ENCODE measurements at regions of chr1 and their contacts with region 1.

Region 1: DNA sequence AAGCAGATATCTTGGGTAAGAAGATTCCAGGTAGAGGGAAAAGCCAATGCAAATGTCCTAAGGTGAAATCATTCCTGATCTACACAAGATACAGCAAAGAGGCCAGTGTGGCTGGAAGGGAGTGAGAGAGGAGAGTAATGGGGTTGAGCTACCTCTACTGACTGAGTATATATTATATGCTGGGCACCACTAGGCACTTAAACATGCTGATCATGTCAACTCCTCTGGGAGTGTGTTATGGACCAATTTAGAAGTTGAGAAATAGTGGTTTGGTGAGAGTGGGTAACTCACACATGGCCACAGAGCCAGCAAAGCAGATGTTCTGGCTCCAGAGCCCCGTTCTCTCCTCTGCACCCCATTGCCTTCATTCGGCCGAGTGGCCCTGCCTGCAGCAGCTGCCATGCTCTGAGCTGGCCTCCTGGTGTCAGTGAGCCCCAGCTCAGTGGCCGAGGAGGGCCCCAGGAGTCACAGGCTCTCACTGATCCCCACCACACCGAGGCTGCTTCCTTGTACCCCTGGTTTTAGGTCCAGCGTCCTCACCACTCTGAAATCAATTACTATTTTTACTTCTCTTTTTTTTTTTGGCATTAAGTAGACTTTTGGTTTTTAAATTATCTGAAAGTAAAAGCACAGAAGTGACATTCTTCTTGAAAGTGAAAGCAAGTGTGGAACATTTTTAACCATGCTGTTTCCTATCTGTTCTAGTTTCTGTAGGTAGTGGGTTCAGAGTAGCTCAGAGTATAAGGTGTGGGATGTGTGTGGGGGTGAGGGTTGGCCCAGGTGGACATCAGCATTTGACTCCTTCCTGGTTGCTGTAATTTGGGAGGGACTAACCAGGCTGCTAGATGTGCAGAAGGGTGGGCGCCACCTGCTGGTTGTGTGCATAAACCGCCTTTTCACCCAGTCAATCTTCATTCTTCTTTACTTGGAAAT is 45.8 kb upstream of the CRNN start:
- DNase-seq: peak; percentile 54
- ATAC-seq: peak; percentile 78
- H3K4me3 ChIP-seq: peak overlapping the region; percentile 12 to 29
- H3K27ac ChIP-seq: no peak overlapping the region
- H3K4me1 ChIP-seq: no peaks in the 10 kb centered on the region
- H3K27me3 ChIP-seq: no peaks in the 10 kb centered on the region
- CTCF ChIP-seq: peak; percentile 95

Region 2: GRCh38 chr1:152047730-152048402 is 412.0 kb before region 1 on chr1:
- CTCF ChIA-PET with region 1: interaction called, 14 read pairs
- POLR2A ChIA-PET with region 1: no interaction called
- in situ Hi-C with region 1: no loop called
- intact Hi-C with region 1: loop called (anchors 5 kb)
- DNase-seq: peak; percentile 96
- ATAC-seq: peak; percentile 97
- H3K4me3 ChIP-seq: peak overlapping the region; percentile 34 to 59
- H3K27ac ChIP-seq: peak overlapping the region; percentile 99
- H3K4me1 ChIP-seq: peaks cover 23% of the 10 kb centered on the region
- H3K27me3 ChIP-seq: no peaks in the 10 kb centered on the region
- CTCF ChIP-seq: peak; percentile 75

Region 3: GRCh38 chr1:152141974-152142584 is 317.8 kb before region 1 on chr1:
- CTCF ChIA-PET with region 1: interaction called, 4 read pairs
- POLR2A ChIA-PET with region 1: no interaction called
- in situ Hi-C with region 1: no loop called
- intact Hi-C with region 1: loop called (anchors 5 kb)
- DNase-seq: peak; percentile 41
- ATAC-seq: peak; percentile 94
- H3K4me3 ChIP-seq: no peak overlapping the region
- H3K27ac ChIP-seq: no peak overlapping the region
- H3K4me1 ChIP-seq: no peaks in the 10 kb centered on the region
- H3K27me3 ChIP-seq: peaks cover 4% of the 10 kb centered on the region
- CTCF ChIP-seq: peak; percentile 86

Region 4: DNA sequence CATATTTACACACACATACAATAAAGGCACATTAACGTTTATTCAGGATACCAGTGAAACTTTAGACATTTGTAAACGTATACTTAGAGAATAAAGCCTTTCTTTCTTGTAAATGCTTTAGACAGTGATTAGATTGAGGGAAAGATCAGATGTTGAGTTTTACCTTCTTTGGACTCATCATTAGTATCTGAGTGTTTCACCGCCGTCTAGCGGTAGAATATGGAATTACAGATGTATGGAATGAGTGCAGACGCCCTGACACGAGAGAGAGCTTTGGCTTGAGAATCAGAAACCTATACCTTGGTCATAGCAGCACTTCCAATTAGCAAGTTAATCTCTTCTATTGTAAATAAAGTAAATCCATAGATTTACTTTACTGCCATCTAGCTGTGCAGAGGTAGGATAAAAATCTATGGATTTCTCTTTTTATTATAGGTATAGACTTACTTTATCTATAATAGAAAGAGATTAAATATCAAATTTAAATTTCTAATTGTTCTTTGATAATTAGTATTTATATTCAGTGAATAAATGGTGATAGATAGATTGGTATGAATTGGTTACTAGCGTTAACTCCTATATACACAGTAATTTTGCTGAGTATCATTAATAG is 112.6 kb before region 1 on chr1:
- CTCF ChIA-PET with region 1: interaction called, 10 read pairs
- POLR2A ChIA-PET with region 1: no interaction called
- in situ Hi-C with region 1: no loop called
- intact Hi-C with region 1: no loop called
- DNase-seq: peak; percentile 68
- ATAC-seq: peak; percentile 87
- H3K4me3 ChIP-seq: no peak overlapping the region
- H3K27ac ChIP-seq: no peak overlapping the region
- H3K4me1 ChIP-seq: no peaks in the 10 kb centered on the region
- H3K27me3 ChIP-seq: 0 out of 2 replicates have a peak, but pooled peaks cover 2% of the 10 kb centered on the region
- CTCF ChIP-seq: peak; percentile 86; the same call in 1 of the 2 replicates

Region 5: DNA sequence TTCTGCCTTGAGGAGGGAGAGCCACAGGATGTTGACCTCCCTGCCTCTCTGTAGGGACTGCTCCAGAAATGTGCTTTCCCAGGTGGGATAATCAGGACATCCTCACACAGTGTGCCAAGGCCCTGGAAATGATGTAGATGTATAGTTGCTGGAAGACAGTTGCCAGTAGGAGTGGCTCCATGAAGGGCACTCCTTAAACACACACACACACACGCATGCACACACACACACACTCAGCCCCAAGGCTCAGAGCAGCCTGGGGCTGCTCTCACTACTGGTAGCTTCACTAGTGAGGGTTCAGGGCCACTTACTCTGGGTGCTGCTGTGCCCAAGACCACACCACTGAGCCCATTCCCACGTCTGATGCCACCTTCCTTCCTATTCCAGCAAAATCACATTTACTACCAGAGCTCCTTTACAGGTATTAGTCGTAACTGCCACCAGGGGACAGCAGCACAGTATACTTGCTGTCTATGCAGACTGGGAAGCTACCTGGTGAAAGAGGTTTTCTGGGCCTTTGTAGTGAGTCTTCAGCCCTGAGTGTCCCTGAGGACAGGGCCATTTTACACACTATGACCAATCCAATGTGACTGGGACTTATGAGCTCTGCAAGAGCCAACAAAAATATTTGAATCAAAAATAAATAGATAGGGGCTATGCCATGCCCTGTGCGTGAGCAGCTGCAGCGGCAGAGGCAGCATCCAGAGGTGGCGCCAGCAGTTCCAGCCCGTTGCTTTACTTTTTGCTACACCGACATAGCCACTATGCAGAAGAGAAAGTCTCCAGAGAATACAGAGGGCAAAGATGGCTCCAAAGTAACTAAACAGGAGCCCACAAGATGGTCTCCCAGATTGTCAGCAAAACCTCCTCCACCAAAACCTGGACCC is 60.8 kb before region 1 on chr1:
- CTCF ChIA-PET with region 1: interaction called, 36 read pairs
- POLR2A ChIA-PET with region 1: no interaction called
- in situ Hi-C with region 1: no loop called
- intact Hi-C with region 1: no loop called
- DNase-seq: no peak
- ATAC-seq: peak; percentile 94
- H3K4me3 ChIP-seq: no peak overlapping the region
- H3K27ac ChIP-seq: no peak overlapping the region
- H3K4me1 ChIP-seq: no peaks in the 10 kb centered on the region; the same call in 1 of the 2 replicates
- H3K27me3 ChIP-seq: 0 out of 2 replicates have a peak, but pooled peaks cover 4% of the 10 kb centered on the region
- CTCF ChIP-seq: peak; percentile 80